Ovary (tissue), 10 donors: ENCODE measurements at regions of chr12 and their contacts with region 1.

Region 1: DNA sequence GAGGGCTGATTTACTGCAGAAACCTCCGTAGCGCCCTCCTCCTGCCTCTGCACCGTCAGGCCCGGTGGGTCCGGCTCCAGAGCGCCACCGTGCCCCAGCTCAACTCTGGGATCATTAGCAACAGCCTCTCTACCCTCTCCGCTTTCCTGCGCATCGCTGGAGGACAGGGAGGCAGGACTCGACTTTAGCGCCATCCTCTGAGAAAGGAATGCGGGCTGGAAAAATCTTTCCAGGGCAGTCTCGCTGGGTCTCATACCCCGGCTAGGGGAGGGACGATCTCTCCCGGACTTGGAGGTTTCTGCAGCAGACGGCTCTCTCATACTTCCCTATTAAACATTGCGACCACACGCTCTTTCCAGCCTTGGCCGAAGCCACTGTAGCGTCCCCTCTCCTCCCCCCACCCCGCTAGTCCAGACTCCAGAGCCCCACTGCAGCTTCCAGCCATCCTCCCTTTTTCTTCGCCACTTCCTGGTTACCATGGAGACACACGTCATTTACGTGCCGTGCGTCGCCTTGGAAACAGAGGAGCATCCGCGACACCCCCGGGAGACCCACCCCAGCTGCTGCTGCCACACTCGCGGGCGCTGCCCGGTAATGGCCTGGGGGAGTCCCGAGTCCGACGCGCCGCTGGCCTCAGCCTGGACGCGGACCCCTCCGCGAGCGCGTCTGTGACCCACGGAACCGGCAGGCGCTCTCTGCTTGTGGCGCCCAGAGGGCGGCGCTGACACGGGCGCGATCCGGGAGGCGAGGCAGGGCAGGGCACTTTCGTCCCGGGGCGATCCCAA is at the start of gene CCDC184:
- DNase-seq: peak; percentile 67 to 75 (median 74)
- H3K4me3 ChIP-seq: peak within 1 kb of the TSS; percentile 62
- H3K27ac ChIP-seq: no peak within 1 kb of the TSS
- H3K4me1 ChIP-seq: peaks cover 8% of the 10 kb centered on the region
- H3K27me3 ChIP-seq: no peaks in the 10 kb centered on the region
- CTCF ChIP-seq: peak in 2 of 3 donors; percentile 38 to 58
- EP300 ChIP-seq: no peak
- POLR2A ChIP-seq: peak; percentile 33
- total RNA-seq, gene CCDC184: 3.9 to 16.6 (median 6.0) TPM

Region 2: DNA sequence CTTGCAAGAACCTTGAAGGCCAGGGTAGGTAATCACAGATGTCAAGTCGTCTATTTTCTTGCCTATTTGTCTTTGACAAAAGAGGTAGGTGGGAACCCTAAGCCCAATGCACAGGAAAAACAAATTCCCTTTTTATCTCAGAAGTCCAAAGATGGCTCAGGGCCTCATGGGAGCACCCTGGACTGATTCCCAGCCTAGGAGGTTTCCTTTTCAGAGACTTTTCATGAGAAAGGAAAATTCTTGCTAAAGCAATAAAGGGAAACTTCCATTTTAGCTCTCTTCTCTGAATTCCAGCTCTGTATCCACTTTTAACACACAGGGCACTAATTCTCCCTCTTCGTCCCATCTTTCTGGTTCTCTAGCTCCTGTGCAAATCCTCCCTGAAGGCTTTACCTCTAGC is 166.2 kb after region 1 on chr12:
- intact Hi-C with region 1: loop called in 1 of 4 experiments (anchors 10 kb)
- DNase-seq: peak in 3 of 5 donors; percentile 31 to 67 (median 46)
- H3K4me3 ChIP-seq: peak overlapping the region; percentile 79
- H3K27ac ChIP-seq: peak overlapping the region in 1 of 2 donors; percentile 95
- H3K4me1 ChIP-seq: no peaks in the 10 kb centered on the region
- H3K27me3 ChIP-seq: no peaks in the 10 kb centered on the region
- CTCF ChIP-seq: no peak
- EP300 ChIP-seq: no peak
- POLR2A ChIP-seq: no peak

Region 3: DNA sequence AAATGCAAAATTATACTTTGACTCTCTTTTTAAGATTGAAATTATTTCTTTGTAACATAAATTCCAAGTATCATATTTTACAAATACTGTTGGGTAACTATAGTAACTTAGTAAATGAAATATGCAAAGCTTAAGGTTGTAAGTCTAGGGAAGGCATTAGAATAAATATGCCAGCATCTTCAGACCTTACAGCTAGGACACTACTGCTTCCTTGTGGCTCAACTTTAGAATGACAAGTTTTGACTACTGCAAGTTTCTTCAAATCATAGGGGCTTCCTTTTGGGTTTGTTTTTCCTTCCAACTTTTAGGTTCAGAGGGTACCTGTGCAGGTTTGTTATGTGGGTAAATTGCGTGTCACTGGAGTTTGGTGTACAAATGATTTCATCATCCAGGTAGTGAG is 271.4 kb after region 1 on chr12:
- intact Hi-C with region 1: loop called in 1 of 4 experiments (anchors 10 kb)
- DNase-seq: no peak
- H3K4me3 ChIP-seq: no peak overlapping the region
- H3K27ac ChIP-seq: no peak overlapping the region
- H3K4me1 ChIP-seq: no peaks in the 10 kb centered on the region
- H3K27me3 ChIP-seq: no peaks in the 10 kb centered on the region
- CTCF ChIP-seq: peak; percentile 18 to 50 (median 49)
- EP300 ChIP-seq: no peak
- POLR2A ChIP-seq: no peak

Region 4: GRCh38 chr12:48629541-48629940 is 446.3 kb after region 1 on chr12:
- intact Hi-C with region 1: loop called in 2 of 4 experiments (anchors 10 kb)
- DNase-seq: no peak
- H3K4me3 ChIP-seq: no peak overlapping the region
- H3K27ac ChIP-seq: no peak overlapping the region
- H3K4me1 ChIP-seq: no peaks in the 10 kb centered on the region
- H3K27me3 ChIP-seq: no peaks in the 10 kb centered on the region
- CTCF ChIP-seq: no peak
- EP300 ChIP-seq: no peak
- POLR2A ChIP-seq: no peak